ENCODE measurements at regions of chr10 and their contacts with region 1.

Region 1: GRCh38 chr10:22624289-22624738 is 90.1 kb downstream of the PIP4K2A start:
- DNase-seq: no peak
- H3K4me3 ChIP-seq: no peak overlapping the region
- H3K27ac ChIP-seq: no peak overlapping the region
- H3K4me1 ChIP-seq: peaks cover 4 to 33% (median 15%) of the 10 kb centered on the region in 4 experiments
- H3K27me3 ChIP-seq: no peaks in the 10 kb centered on the region

Region 2: GRCh38 chr10:22611425-22612115 is 12.7 kb before region 1 on chr10:
- CTCF ChIA-PET with region 1: interaction called, 26 read pairs
- POLR2A ChIA-PET with region 1: no interaction called
- DNase-seq: peak in 2 of 3 donors; percentile 60 to 65
- H3K4me3 ChIP-seq: peak overlapping the region in 1 of 7 experiments; percentile 19
- H3K27ac ChIP-seq: no peak overlapping the region
- H3K4me1 ChIP-seq: peaks cover 17 to 76% (median 34%) of the 10 kb centered on the region in 4 experiments
- H3K27me3 ChIP-seq: no peaks in the 10 kb centered on the region

Region 3: GRCh38 chr10:22894714-22895113 is 270.4 kb after region 1 on chr10:
- CTCF ChIA-PET with region 1: no interaction called
- POLR2A ChIA-PET with region 1: no interaction called
- DNase-seq: peak in 1 of 3 donors; percentile 11
- H3K4me3 ChIP-seq: peak overlapping the region in 1 of 7 experiments; percentile 5
- H3K27ac ChIP-seq: no peak overlapping the region
- H3K4me1 ChIP-seq: no peaks in the 10 kb centered on the region
- H3K27me3 ChIP-seq: no peaks in the 10 kb centered on the region